Ovary (tissue), 10 donors: ENCODE measurements at regions of chr19 and their contacts with region 1.

Region 1: DNA sequence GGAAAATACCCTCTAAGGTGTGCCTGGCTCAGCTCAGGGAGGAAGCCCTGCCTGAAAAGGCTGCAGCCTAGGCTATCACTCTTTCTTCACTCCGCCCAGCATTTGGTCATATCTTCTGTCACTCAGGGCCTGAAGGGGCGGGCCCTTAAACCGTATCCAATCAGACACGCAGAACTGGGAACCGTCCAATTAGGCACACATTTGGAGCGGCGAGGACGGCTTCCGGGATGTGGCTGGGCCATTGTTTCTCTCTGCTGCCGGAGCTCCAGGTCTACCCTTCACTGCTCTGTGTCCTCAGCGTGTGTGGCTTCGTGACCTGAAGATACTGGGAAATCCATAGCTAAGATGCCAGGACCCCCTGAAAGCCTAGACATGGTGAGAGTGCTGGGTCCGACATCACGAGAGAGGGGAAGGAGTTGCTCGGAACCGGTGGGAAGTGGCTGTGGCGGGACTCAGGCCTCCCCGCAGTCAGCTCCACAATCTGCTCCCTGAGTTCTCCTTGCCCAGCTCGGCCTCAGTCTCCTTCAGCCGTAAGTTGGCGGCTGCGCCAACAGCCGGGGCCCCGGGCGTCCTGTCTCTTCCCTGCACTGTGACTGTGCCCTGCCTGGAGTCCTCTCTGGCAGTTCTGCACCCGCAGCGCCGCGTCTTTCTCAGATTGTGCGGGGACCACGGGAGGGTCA is at the start of gene ZNF493:
- DNase-seq: peak; percentile 93 to 96 (median 94)
- H3K4me3 ChIP-seq: peak within 1 kb of the TSS; percentile 89
- H3K27ac ChIP-seq: peak within 1 kb of the TSS; percentile 9 to 68
- H3K4me1 ChIP-seq: peaks cover 5% of the 10 kb centered on the region
- H3K27me3 ChIP-seq: no peaks in the 10 kb centered on the region
- CTCF ChIP-seq: no peak
- EP300 ChIP-seq: no peak
- POLR2A ChIP-seq: peak; percentile 65
- total RNA-seq, gene ZNF493: 28.6 to 86.6 (median 35.6) TPM

Region 2: DNA sequence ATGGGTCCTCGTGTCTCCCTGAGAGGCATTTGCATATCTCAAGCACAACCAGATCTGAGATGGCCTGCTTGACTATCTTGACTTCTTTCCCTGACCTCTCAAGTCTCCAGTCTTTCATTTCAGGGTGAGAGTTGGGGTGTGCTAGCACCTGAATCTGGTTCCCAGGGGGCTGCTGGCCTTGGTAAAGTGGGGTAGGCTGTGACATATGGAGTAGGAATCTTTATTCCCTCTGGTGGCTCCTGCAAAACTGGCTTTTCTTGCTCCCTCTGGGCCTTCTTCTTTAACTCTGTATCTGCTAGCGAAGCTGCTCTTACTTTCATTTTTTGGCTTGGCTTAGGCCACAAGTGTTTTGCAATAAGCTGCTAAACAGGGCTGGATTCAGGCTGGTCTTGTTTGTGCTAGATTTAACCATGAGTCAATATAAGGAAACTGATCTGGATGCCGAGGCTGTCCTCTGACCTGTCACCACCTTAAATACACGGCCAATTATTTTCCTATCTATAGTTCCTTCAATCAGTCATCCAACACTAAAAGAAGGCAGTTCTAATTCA is 42.2 kb after region 1 on chr19:
- intact Hi-C with region 1: loop called in 1 of 4 experiments (anchors 1 kb)
- DNase-seq: peak in 3 of 5 donors; percentile 28 to 59 (median 39)
- H3K4me3 ChIP-seq: peak overlapping the region; percentile 38
- H3K27ac ChIP-seq: peak overlapping the region; percentile 78 to 95
- H3K4me1 ChIP-seq: peaks cover 8% of the 10 kb centered on the region
- H3K27me3 ChIP-seq: no peaks in the 10 kb centered on the region
- CTCF ChIP-seq: no peak
- EP300 ChIP-seq: no peak
- POLR2A ChIP-seq: no peak

Region 3: DNA sequence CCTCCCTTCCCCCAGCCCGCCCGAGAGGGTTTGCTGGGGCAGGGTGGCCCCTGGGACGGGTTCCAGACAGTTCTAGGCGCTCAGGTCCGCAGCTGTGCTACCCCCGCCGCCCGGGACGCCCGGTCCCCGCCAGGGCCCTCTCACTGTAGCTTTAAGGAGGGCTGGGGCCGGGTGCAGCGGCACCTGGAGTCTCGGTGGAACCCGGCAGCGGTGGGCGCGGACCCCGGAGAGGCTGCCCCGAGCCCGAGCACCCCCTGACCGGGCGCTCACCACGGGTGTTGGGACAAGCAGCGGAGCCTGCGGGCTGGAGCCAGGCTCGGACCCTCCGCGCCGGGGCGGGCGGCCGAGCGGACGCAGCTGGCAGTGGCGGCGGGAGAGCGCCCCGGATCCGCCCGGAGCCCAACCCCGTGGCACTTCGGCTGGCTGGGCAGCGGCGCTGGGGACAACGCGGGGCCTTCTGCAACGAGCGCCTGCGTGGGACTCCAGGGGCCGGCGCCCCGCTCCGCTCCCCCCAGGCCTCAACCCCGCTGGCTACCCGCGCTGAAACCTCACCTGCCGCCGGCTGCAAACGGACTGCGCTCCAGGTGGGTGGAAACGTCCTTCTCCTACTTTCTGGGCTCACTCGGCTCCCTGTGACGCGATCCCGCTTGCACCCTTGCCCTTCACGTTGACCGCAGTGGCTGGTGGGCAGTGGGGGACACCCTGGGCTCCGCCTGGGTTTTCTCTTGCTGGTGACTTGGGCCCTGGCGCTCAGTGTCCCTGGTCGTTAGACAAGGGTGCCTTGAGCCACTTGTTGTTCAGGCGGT is 189.5 kb after region 1 on chr19:
- intact Hi-C with region 1: no loop called
- DNase-seq: peak in 3 of 5 donors; percentile 51 to 57 (median 57)
- H3K4me3 ChIP-seq: peak overlapping the region; percentile 42
- H3K27ac ChIP-seq: peak overlapping the region; percentile 26 to 47
- H3K4me1 ChIP-seq: no peaks in the 10 kb centered on the region
- H3K27me3 ChIP-seq: no peaks in the 10 kb centered on the region
- CTCF ChIP-seq: no peak
- EP300 ChIP-seq: no peak
- POLR2A ChIP-seq: no peak